Dorsolateral prefrontal cortex (tissue), 120 donors: ENCODE measurements at regions of chr12 and their contacts with region 1.

Region 1: DNA sequence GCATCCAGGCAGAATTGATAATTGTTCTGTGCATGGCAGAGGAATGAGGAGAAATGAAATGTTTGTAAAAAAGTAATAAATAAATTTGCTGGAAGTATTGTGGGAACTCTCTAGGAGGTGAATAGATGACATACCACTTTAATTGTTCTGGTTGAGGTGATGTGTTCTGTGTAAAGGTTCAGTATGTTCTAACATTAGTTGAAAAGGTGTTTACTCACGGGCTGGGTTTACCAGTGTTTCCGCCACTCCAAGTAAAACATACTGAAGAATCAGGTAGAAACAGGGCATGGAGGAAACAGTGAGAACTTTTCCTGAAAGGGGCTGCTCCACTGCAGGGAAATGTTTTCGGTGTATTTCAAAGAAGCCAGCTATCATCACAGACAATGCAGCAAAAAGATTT is 53.3 kb downstream of the SLC15A5 start:
- DNase-seq: no peak
- H3K4me3 ChIP-seq: no peak overlapping the region
- H3K27ac ChIP-seq: no peak overlapping the region
- H3K27me3 ChIP-seq: no peaks in the 10 kb centered on the region
- CTCF ChIP-seq: no peak

Region 2: GRCh38 chr12:16198884-16199283 is 25.3 kb before region 1 on chr12:
- intact Hi-C with region 1: loop called in 1 of 2 experiments (anchors 1 kb)
- DNase-seq: no peak
- H3K4me3 ChIP-seq: no peak overlapping the region
- H3K27ac ChIP-seq: no peak overlapping the region
- H3K27me3 ChIP-seq: no peaks in the 10 kb centered on the region
- CTCF ChIP-seq: no peak